Sigmoid colon (tissue), 7 donors: ENCODE measurements at regions of chr9 and their contacts with region 1.

Region 1: GRCh38 chr9:68872026-68872501 is 141.8 kb downstream of the PRKACG start:
- DNase-seq: no peak
- H3K4me3 ChIP-seq: no peak overlapping the region
- H3K27ac ChIP-seq: peak overlapping the region in 3 of 4 donors; percentile 55 to 71 (median 68)
- H3K4me1 ChIP-seq: peaks cover 0 to 54% (median 44%) of the 10 kb centered on the region in 4 donors
- H3K27me3 ChIP-seq: no peaks in the 10 kb centered on the region
- CTCF ChIP-seq: no peak
- EP300 ChIP-seq: no peak
- POLR2A ChIP-seq: no peak

Region 2: GRCh38 chr9:68825762-68826472 is 46.1 kb before region 1 on chr9:
- intact Hi-C with region 1: loop called (anchors 5 kb)
- DNase-seq: no peak
- H3K4me3 ChIP-seq: no peak overlapping the region
- H3K27ac ChIP-seq: peak overlapping the region in 2 of 4 donors; percentile 19 to 45
- H3K4me1 ChIP-seq: peaks cover 0 to 4% (median 0%) of the 10 kb centered on the region in 4 donors
- H3K27me3 ChIP-seq: no peaks in the 10 kb centered on the region
- CTCF ChIP-seq: no peak
- EP300 ChIP-seq: peak in 1 of 4 donors; percentile 59
- POLR2A ChIP-seq: no peak

Region 3: GRCh38 chr9:68895741-68896478 is 23.8 kb after region 1 on chr9:
- intact Hi-C with region 1: no loop called
- DNase-seq: no peak
- H3K4me3 ChIP-seq: no peak overlapping the region
- H3K27ac ChIP-seq: peak overlapping the region in 1 of 4 donors; percentile 11
- H3K4me1 ChIP-seq: no peaks in the 10 kb centered on the region
- H3K27me3 ChIP-seq: no peaks in the 10 kb centered on the region
- CTCF ChIP-seq: no peak
- EP300 ChIP-seq: no peak
- POLR2A ChIP-seq: no peak

Region 4: DNA sequence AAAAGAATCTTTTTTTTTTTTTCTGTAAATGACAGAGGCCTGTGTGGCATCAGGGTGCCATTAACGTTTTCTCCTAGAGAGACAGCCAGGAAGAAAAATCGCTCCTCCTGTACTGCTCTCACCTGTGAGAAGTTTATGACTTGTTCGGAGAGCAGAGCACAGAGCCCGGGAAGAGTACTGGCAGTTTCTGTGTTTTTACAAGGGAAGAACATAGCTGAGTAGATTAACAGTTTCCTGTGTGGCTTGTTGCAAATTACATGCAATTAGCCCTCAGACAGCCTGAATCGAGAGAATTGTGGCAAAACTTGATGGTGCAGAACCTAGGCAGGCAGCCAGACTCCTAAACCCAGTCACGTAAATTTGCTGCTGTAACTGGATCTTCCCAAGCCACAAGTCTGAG is 109.7 kb after region 1 on chr9:
- intact Hi-C with region 1: loop called (anchors 5 kb)
- DNase-seq: no peak
- H3K4me3 ChIP-seq: no peak overlapping the region
- H3K27ac ChIP-seq: peak overlapping the region in 3 of 4 donors; percentile 80 to 88 (median 86)
- H3K4me1 ChIP-seq: peaks cover 0 to 53% (median 42%) of the 10 kb centered on the region in 4 donors
- H3K27me3 ChIP-seq: no peaks in the 10 kb centered on the region
- CTCF ChIP-seq: no peak
- EP300 ChIP-seq: no peak
- POLR2A ChIP-seq: no peak